ENCODE measurements at regions of chr6 and their contacts with region 1.

Region 1: GRCh38 chr6:149941583-149942431 is at the start of gene ULBP2:
- DNase-seq: peak; percentile 79
- CTCF ChIP-seq: no peak

Region 2: DNA sequence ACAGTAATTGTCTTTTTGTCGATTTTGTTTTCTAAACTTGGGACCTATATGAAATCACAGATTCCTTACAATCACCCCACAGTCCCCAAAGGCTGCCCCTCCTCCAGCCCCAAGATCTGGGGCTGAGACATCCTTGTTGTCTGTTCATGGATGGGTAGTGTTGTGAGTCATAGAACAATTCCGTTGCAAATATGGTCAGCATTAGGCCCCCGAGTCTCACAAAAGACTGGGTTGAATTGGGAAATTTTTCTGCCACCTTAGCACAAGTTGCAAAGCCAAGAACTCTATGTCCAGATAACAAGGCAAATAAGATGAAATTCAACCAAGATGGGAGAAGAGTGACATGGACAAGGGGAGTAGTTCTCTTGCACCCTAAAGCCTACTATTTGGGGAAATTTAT is 634.8 kb before region 1 on chr6:
- in situ Hi-C with region 1: no loop called
- DNase-seq: no peak
- CTCF ChIP-seq: no peak

Region 3: DNA sequence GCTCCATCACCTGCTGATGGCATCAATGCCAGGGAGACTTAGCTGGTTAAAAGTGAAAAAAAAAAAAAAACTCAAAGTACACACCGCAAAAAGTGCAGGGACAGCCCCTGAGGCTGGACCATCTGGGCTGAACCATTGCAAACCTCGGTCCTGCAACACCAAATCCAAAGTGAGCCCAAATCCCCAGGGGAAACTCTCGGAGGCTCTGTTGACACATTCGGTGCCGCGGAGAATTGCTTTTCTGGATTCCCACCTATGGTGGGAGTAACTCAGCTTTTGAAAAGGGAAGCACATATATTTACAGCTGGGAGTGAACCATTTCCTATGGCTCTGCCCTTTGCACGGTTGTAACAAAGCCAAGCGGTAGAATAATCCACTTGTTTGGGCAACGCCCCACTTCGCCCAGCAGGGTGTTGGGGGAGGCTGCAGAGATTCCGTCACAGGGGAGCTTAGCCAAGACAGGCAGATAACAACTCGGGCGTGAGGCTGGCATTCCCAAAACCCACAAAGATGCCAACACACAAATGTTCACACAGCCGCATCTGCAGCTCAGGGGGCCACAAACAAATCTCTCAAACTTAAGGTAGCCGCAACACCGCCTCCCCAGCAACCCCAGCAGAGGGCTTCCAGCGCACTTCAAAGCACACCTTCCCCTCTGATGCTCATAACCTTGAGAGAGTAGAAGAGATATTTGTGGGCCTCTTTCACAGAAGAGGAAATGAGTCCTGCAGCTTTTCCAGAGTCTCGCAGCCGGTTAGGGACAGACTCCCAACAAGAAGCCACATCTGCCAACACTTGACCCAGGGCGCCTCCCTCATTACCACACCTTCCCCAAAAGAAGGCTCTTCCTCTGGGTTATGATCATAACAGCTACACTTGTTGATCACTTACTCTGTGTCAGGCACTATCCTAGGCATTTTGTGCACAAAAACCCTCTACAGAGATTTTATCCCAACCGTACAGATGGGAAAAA is 468.4 kb before region 1 on chr6:
- in situ Hi-C with region 1: no loop called
- DNase-seq: no peak
- CTCF ChIP-seq: peak; percentile 5

Region 4: DNA sequence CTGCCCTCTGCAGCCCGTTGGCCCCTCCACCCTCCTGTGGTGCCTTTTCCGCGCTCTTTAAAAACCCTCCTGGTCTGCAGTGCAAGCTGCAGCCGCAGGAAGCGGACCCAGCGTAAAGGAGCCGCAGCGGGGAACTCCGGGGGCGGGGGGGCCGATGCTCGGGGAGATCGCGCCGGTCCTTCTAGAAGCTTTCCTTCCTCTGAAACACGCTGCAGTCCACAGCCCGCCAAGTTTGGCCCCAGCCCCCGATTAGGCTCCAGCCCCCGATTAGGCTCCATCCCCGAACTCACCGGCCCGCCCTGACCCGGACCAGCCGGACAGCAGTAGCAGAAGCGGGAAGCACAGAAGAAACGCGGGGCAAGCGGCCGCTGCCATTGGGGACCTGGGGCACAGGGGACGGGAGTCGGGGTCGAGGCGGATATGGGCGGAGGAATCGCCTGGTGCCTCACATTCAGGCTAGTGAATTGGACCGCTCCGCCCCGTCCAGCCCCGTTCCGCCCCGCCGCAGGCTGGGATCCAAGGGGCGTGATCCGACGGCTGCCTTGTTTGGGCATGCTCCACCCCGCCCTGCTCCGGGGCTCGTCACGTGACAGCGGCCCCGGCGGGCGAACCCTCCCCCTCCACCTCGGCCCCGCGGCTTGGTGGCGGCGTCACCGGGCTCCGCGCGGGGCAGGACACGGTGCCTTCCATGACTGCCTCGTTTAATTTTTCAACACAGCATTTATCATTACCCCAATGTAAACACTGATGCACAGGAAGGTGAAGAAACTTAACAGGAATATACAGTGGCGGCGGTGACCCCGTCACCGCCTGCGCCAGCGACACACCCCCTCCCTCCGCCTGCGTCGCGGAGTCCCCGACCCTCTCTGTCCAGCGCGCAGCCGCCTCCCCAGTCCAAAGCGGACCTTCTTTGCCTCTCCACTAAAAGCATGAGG is 63.2 kb after region 1 on chr6:
- in situ Hi-C with region 1: loop called (anchors 10 kb)
- DNase-seq: peak; percentile 92
- CTCF ChIP-seq: no peak